ENCODE measurements at regions of chr17 and their contacts with region 1.

Region 1: DNA sequence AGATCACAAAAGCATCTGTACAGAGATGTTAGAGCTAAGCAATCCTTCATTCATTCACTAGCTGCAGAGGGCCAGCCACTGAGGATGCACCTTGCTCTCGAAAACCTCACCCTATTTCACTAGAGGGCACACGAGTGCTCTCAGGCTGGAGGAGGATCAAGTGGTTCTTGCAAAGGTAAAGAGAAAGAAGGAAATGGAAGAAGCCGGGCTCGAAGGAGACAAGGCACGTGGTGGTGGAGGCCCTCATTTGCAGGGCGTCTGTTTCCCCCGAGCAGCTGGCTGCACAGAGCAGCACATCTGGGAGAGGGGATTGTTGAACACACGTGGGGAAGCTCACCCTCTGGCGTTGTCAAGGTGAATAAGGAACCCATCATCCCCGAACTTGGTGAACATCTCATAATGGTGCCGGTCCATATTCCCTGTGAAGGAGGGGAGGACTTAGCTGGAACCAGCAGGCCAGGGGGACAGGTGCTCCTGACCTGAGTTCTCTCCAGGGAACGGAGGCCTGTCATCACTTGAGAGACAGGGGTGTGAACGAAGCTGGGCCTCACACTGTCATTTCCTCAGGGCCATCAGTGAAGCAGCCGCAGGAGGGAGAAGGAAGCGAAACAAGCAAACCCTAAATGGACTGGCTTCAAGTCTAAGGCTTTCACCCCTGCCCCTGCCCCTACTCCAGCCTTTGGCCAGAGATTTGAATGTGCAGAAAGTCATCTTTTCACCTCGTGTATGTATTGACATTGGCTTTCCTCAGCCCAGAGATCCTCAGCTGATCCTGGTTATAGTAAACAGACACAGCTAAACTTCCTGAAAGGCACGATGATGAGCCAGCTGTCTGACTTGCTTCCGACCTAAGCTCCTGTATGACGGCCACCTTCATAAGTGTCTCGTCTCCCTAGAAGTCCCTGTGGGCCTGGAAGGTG is 27.6 kb downstream of the PRKAR1A start:
- DNase-seq: no peak
- H3K4me3 ChIP-seq: no peak overlapping the region
- H3K27ac ChIP-seq: no peak overlapping the region
- H3K4me1 ChIP-seq: no peaks in the 10 kb centered on the region
- H3K27me3 ChIP-seq: no peaks in the 10 kb centered on the region
- CTCF ChIP-seq: peak; percentile 43 to 69 (median 56)

Region 2: DNA sequence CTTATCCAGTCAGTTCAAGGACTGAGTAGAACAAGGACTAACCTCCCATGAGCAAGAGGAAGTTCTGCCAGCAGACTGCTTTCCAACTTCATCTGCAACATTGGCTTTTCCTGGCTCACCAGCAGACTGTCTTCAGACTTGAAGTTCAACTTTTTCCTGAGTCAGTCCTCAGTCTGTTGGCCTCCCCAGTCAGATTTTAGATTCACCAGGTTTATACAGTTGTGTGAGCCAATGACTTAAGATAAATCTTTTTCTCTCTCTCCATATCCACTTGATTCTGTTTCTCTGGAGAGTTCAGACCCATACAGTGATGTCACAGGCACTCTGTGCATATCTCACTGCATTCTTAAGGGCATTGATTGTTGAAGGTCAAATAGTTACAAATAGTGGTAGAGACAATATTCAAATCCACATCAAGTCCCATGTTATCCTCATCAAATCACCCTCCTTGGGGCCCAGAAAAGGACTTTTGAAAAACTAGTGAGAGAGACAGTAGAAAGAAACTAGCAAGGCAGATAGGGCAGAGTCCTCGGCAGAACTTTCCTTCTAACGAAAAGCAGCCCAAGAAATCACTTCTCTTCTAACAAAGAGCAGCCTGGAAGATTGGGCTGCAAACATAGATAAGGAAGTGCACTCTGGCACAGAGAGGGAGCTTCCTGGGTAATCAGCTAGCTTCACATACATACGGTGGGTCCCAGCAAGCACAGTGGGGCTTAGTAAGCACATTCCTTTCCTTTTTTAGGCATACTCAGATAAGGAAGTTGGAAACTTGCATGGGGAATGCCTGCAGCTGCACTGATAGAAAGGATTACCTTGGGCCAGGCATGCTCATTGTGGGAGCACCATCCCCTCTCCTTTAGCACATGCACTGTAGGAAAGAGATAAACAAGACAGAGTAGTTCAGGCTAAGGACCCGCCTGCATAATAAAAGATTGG is 193.7 kb after region 1 on chr17:
- dilution Hi-C with region 1: loop called (anchors 25 kb)
- DNase-seq: no peak
- H3K4me3 ChIP-seq: no peak overlapping the region
- H3K27ac ChIP-seq: no peak overlapping the region
- H3K4me1 ChIP-seq: peaks cover 6% of the 10 kb centered on the region
- H3K27me3 ChIP-seq: no peaks in the 10 kb centered on the region
- CTCF ChIP-seq: no peak